IMR-90 (cell line): ENCODE measurements at regions of chr7 and their contacts with region 1.

Region 1: DNA sequence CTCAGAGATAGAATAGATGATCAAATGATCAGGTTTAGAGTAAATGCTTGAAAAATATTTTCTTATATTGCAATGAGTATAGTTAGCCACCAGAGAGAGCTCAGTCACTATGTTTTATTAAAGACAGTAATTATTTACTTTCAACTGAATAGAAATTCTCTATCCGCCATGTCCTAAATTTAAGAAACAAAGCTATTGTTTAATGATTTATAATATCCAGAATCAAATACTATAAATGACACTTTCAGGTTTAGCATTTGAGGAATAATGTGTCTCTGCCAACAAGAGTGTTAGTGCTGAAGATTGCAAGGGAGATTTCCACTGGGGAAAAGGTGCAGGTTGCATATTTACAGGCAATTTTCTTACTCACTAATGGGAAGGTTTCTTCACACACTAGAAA is 184.7 kb downstream of the DGKB start:
- DNase-seq: peak; percentile 13
- ATAC-seq: peak; percentile 68
- H3K4me3 ChIP-seq: no peak overlapping the region
- H3K27ac ChIP-seq: no peak overlapping the region
- H3K4me1 ChIP-seq: no peaks in the 10 kb centered on the region
- H3K27me3 ChIP-seq: no peaks in the 10 kb centered on the region
- CTCF ChIP-seq: peak; percentile 58
- POLR2A ChIP-seq: no peak
- RAD21 ChIP-seq: peak; percentile 58

Region 2: DNA sequence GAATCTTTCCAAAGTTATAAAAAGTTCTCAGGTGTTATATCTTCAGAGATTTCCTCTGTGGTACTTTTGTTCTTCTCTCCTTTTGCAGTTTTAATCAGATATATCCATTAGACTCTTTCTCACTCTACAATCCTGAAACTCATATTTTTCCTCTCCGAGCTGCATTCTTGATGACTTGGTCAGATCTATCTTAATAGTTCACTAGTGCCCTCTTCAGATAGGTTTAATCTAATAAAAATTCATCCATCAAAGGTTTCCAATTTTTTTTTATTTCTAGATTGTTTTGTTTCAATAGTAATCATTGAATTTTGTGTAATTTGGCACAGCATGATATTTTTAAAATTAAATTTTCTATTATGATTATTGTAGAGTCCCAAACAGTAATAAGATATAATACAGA is 206.6 kb after region 1 on chr7:
- CTCF ChIA-PET with region 1: no interaction called
- POLR2A ChIA-PET with region 1: no interaction called
- dilution Hi-C with region 1: no loop called
- in situ Hi-C with region 1: no loop called
- intact Hi-C with region 1: loop called (anchors 5 kb)
- DNase-seq: no peak
- ATAC-seq: no peak
- H3K4me3 ChIP-seq: no peak overlapping the region
- H3K27ac ChIP-seq: no peak overlapping the region
- H3K4me1 ChIP-seq: no peaks in the 10 kb centered on the region
- H3K27me3 ChIP-seq: no peaks in the 10 kb centered on the region
- CTCF ChIP-seq: no peak
- POLR2A ChIP-seq: no peak
- RAD21 ChIP-seq: 0 out of 2 replicates have a peak, but pooled peaks have one; percentile 11

Region 3: GRCh38 chr7:15291702-15292101 is 573.9 kb after region 1 on chr7:
- CTCF ChIA-PET with region 1: no interaction called
- POLR2A ChIA-PET with region 1: no interaction called
- dilution Hi-C with region 1: no loop called
- in situ Hi-C with region 1: no loop called
- intact Hi-C with region 1: loop called (anchors 5 kb)
- DNase-seq: no peak
- ATAC-seq: no peak
- H3K4me3 ChIP-seq: no peak overlapping the region
- H3K27ac ChIP-seq: no peak overlapping the region
- H3K4me1 ChIP-seq: no peaks in the 10 kb centered on the region
- H3K27me3 ChIP-seq: no peaks in the 10 kb centered on the region
- CTCF ChIP-seq: no peak
- POLR2A ChIP-seq: no peak
- RAD21 ChIP-seq: no peak

Region 4: DNA sequence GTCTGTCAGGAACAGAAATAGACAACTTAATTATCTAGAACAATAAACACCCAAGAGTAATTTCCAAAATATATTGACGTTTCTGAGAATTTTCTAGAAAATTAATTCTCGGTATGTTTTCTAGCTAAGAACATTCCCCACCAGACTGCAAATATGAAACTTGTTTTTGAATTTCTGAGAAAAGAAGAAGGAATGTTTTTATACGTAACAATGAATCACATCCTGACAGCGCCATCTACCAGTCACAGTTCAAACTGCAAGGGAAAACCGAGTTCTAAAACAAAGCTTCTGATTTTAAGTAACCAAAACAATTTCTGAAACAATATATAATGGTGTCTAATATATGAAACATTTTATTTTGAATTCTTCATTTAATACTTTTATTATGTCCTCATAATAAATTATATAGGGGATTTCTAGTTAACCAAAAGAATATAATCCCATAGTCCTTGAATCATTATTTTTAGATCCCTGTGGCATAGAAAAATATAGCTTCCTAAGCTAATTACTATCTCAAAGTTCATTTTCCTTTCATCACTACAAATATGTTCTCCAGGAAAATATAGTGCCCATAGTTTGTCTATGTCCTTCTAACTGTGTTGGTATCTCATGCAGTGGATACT is 1003.1 kb after region 1 on chr7:
- CTCF ChIA-PET with region 1: no interaction called
- POLR2A ChIA-PET with region 1: no interaction called
- dilution Hi-C with region 1: no loop called
- in situ Hi-C with region 1: no loop called
- intact Hi-C with region 1: loop called (anchors 10 kb)
- DNase-seq: peak; percentile 53
- ATAC-seq: no peak
- H3K4me3 ChIP-seq: no peak overlapping the region
- H3K27ac ChIP-seq: no peak overlapping the region
- H3K4me1 ChIP-seq: no peaks in the 10 kb centered on the region
- H3K27me3 ChIP-seq: no peaks in the 10 kb centered on the region
- CTCF ChIP-seq: peak; percentile 70
- POLR2A ChIP-seq: no peak
- RAD21 ChIP-seq: peak; percentile 63